ENCODE measurements at regions of chr2 and their contacts with region 1.

Region 1: DNA sequence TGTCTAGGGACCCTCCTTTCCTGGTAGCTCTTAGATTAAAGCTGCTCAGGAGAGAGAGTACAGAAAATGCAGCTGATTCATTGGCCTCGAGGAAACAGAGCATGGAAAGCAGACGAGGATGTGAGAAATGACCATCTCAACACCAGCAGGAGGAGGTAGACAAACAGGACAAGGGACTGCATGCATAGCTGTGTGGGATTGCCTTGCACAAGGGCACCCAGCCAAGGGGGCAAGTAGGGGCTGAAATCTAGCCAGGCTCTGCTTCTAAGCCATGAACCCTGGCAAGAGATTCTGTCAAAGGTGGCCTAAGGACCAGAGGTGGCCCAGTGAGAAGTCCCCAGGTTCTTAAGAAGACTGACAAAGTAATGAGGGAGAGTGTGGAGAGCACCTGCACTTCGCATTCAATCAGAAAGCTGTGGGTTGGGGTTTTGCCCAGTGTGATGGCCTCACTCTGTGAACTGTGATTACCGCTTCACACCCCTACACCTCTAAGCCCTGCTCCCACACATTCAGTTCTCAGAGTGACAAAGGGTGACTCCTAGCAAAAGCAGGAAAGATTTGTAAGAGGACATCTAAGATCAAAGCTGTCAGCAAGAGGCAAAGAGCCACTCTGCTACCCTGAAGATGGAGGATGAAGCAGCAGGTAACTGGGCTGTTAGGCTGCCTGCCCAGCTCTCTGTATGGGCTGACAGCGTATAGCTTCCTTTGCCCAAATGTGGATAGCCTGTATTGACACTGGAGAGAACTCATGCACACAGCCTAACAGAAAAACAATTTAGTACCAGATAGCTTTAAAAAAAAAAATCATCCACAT is 151.3 kb upstream of the PELI1 start:
- DNase-seq: peak; percentile 73
- H3K4me3 Mint-ChIP-seq: no peak overlapping the region
- H3K27ac Mint-ChIP-seq: no peak overlapping the region
- H3K4me1 Mint-ChIP-seq: peaks cover 16% of the 10 kb centered on the region
- H3K27me3 Mint-ChIP-seq: peaks cover 4% of the 10 kb centered on the region

Region 2: DNA sequence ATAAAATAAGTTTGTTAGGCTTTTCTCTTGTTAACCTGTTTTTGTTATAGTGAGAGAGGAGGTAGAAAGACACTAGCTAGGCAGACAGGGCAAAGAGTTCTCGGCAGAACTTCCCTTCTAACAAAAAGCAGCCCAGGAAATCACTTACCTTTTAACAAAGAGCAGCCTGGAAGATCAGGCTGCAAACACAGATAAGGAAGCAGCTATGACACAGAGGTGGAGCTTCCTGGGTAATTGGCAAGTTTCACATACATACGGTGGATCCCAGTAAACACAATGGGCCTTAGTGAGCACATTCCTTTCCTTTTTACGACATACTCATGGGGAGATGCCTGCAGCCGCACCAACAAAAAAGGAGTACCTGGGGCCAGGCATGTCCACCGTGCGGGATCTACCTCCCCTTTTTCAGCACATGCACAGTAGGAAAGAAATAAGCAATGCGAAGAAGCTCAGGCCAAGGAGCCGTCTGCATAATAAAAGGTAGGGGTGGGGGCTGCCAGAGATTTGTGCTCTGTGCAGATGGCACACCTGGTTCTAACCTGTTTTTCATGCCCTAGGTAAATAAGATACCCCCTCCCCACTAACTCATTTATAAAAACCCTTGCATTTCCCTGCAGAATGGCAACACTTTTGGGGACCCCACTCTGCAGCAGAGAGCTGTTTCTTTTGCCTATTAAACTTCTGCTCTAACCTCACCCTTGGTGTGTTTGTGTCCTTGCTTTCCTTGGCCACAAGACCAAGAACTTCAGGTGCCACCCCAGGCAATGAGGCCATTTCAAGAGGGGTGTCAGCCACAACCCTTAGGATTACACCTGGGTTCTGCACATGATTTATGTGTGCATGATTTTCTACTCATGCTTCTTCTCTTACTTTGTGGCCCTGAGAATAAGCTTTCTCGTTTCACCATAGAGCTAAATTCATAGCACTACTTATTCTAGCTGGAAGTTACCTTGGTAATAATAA is 680.3 kb before region 1 on chr2:
- CTCF ChIA-PET with region 1: no interaction called
- intact Hi-C with region 1: no loop called
- DNase-seq: no peak
- H3K4me3 Mint-ChIP-seq: no peak overlapping the region
- H3K27ac Mint-ChIP-seq: no peak overlapping the region
- H3K4me1 Mint-ChIP-seq: no peaks in the 10 kb centered on the region
- H3K27me3 Mint-ChIP-seq: peaks cover 10% of the 10 kb centered on the region

Region 3: DNA sequence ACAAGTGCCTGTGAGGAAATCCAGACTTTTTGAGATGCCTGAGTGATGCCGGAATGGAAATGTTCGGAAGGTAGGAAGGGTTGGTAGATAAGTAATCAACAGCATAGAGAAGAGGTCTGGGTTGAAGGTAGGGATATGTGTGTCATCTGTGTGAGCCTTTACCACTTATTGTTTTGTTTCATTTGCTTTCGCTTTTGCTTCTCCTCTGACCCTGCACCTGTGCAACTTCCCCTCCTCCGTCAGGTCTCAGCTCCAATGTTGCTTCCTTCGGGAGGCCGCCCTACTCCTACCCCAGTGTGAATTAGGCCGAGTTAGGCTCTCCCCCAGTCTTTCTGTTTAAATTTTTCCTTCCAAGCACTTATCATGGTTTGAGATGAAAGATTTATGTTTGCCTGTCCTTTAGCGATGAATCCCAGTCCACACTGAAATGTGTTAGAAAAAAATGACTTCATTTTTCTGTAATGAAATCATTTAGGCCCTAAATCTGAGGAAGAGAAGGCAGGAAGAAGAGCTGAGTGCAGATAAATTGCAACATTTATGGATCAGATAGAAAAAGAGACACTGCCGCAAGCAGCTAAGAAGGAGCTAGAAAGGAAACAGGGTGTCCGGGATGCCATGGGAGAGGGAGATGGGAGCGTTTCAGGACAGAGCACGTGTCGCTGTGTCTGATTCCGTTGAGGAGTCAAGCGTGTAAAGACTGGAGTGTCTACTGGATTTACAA is 11.7 kb before region 1 on chr2:
- CTCF ChIA-PET with region 1: no interaction called
- intact Hi-C with region 1: loop called (anchors 1 kb)
- DNase-seq: peak; percentile 42
- H3K4me3 Mint-ChIP-seq: no peak overlapping the region
- H3K27ac Mint-ChIP-seq: no peak overlapping the region
- H3K4me1 Mint-ChIP-seq: no peaks in the 10 kb centered on the region
- H3K27me3 Mint-ChIP-seq: no peaks in the 10 kb centered on the region

Region 4: GRCh38 chr2:64675860-64676259 is 380.3 kb after region 1 on chr2:
- CTCF ChIA-PET with region 1: no interaction called
- intact Hi-C with region 1: no loop called
- DNase-seq: peak; percentile 92
- H3K4me3 Mint-ChIP-seq: no peak overlapping the region
- H3K27ac Mint-ChIP-seq: no peak overlapping the region
- H3K4me1 Mint-ChIP-seq: peaks cover 42% of the 10 kb centered on the region
- H3K27me3 Mint-ChIP-seq: no peaks in the 10 kb centered on the region